Activated naive CD4-positive, alpha-beta T cell treated with anti-CD3 and anti-CD28 coated beads for 36 hours (primary cell): ENCODE measurements at regions of chr11 and their contacts with region 1.

Region 1: GRCh38 chr11:58524232-58525036 is 16.5 kb upstream of the OR5B21 start:
- DNase-seq: peak; percentile 67
- H3K4me3 Mint-ChIP-seq: peak overlapping the region; percentile 61
- H3K27ac Mint-ChIP-seq: peak overlapping the region; percentile 86
- H3K4me1 Mint-ChIP-seq: peaks cover 52% of the 10 kb centered on the region
- H3K27me3 Mint-ChIP-seq: no peaks in the 10 kb centered on the region

Region 2: GRCh38 chr11:57426929-57427726 is 1097.3 kb before region 1 on chr11 and contains the start of gene SLC43A3:
- CTCF ChIA-PET with region 1: no interaction called
- intact Hi-C with region 1: loop called (anchors 1 kb)
- DNase-seq: peak; percentile 84
- H3K4me3 Mint-ChIP-seq: peak within 1 kb of the TSS; percentile 95
- H3K27ac Mint-ChIP-seq: peak within 1 kb of the TSS; percentile 96
- H3K4me1 Mint-ChIP-seq: peaks cover 33% of the 10 kb centered on the region
- H3K27me3 Mint-ChIP-seq: no peaks in the 10 kb centered on the region
- total RNA-seq, gene SLC43A3: 116 to 117 TPM

Region 3: DNA sequence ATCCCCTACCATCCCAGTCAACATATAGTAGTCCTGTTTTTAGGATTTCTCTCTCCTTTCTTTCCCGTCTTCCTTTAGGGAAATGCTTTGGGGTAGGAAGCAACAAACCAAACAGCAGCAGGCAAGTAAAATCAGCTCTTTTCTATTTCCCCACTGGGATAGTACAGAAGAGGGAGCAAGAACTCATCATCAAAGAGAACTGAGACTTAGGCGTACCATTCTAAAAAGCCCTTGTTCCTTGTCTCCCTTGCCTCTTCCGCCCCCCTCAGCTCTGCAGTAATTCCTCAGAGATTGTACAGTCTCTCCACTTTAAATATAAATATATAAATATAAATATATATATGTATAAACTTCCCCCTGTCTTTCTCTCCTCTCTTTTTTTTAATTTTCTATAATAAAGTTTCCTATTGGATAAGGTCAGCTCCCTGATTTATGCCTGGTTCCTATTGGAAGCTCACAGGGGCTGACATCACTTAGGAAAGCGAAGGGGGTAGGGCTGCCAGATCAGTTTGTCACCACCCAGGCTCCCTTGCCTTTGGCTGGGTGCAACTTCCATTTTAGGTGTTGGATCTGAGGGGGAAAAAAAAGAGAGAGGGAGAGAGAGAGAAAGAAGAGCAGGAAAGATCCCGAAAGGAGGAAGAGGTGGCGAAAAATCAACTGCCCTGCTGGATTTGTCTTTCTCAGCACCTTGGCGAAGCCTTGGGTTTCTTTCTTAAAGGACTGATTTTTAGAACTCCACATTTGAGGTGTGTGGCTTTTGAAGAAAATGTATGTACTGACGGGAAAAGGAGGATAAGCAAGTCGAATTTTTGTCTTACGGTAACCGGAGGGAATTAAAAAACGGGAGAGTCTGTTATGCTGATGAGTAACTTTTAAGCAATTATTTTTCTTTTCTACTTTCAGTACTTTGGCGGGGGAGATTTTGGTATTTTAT is 762.9 kb before region 1 on chr11 and contains the start of gene CTNND1:
- CTCF ChIA-PET with region 1: no interaction called
- intact Hi-C with region 1: loop called (anchors 5 kb)
- DNase-seq: peak; percentile 33
- H3K4me3 Mint-ChIP-seq: peak within 1 kb of the TSS; percentile 74
- H3K27ac Mint-ChIP-seq: peak within 1 kb of the TSS; percentile 6
- H3K4me1 Mint-ChIP-seq: peaks cover 29% of the 10 kb centered on the region
- H3K27me3 Mint-ChIP-seq: no peaks in the 10 kb centered on the region
- total RNA-seq, gene CTNND1: 5.5 to 8.5 TPM

Region 4: GRCh38 chr11:58112391-58112790 is 412.0 kb before region 1 on chr11:
- CTCF ChIA-PET with region 1: no interaction called
- intact Hi-C with region 1: no loop called
- DNase-seq: no peak
- H3K4me3 Mint-ChIP-seq: no peak overlapping the region
- H3K27ac Mint-ChIP-seq: no peak overlapping the region
- H3K4me1 Mint-ChIP-seq: no peaks in the 10 kb centered on the region
- H3K27me3 Mint-ChIP-seq: peaks cover 14% of the 10 kb centered on the region

Region 5: DNA sequence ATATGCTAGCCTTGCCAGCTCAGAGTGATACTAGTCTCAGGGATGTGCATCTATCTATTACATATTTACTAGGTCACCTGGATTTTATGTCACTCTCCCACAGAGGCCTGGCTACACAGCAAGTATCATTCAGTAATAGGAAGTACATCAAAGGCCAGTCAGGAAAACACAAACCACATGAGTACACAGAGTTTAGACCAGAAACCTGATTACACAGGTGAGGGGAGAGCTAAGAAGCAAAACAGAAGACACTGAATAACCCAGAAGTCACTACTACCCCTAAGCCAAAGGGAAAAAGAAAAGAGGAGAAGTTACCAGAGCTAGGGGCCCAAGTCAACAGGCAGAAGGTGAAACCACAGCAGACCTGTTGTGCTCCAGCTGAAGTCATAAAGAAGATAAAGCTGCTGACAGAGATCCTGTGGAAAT is 38.0 kb after region 1 on chr11:
- CTCF ChIA-PET with region 1: interaction called, 31 read pairs
- intact Hi-C with region 1: no loop called
- DNase-seq: peak; percentile 7
- H3K4me3 Mint-ChIP-seq: no peak overlapping the region
- H3K27ac Mint-ChIP-seq: peak overlapping the region; percentile 84
- H3K4me1 Mint-ChIP-seq: peaks cover 43% of the 10 kb centered on the region
- H3K27me3 Mint-ChIP-seq: no peaks in the 10 kb centered on the region

Region 6: GRCh38 chr11:58629857-58630256 is 105.4 kb after region 1 on chr11:
- CTCF ChIA-PET with region 1: interaction called, 4 read pairs
- intact Hi-C with region 1: loop called (anchors 1 kb)
- DNase-seq: peak; percentile 51
- H3K4me3 Mint-ChIP-seq: no peak overlapping the region
- H3K27ac Mint-ChIP-seq: no peak overlapping the region
- H3K4me1 Mint-ChIP-seq: peaks cover 7% of the 10 kb centered on the region
- H3K27me3 Mint-ChIP-seq: no peaks in the 10 kb centered on the region

Region 7: GRCh38 chr11:59053387-59053786 is 529.0 kb after region 1 on chr11:
- CTCF ChIA-PET with region 1: no interaction called
- intact Hi-C with region 1: loop called (anchors 5 kb)
- DNase-seq: peak; percentile 88
- H3K4me3 Mint-ChIP-seq: no peak overlapping the region
- H3K27ac Mint-ChIP-seq: no peak overlapping the region
- H3K4me1 Mint-ChIP-seq: peaks cover 3% of the 10 kb centered on the region
- H3K27me3 Mint-ChIP-seq: peaks cover 22% of the 10 kb centered on the region